CD14-positive monocyte (primary cell): ENCODE measurements at regions of chr2 and their contacts with region 1.

Region 1: DNA sequence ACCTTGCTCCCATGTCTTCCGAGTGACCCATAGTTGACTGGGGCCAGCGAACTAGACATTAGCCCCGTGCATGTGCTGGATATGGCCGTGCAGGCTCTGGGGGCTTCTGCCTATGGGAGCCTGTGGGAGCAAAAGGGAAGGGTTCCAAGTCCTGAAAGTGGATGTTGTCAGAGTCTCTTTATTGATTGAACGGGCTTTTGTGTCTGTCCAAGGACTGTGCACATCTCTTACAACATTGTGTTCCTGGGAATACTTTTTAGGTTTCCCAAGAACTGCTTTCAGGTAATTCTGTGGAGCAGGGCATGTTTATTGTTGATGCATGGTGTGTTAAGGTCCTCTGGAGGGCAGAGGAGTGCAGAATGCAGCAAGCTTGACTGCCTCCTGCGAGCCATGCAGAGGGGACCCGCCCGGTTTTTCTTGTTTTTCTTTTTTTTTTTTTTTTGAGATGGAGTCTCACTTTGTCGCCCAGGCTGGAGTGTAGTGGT is 5.0 kb downstream of the RNF144A start:
- DNase-seq: no peak
- H3K4me3 ChIP-seq: no peak overlapping the region
- H3K4me3 Mint-ChIP-seq: no peak overlapping the region
- H3K27ac ChIP-seq: no peak overlapping the region
- H3K27ac Mint-ChIP-seq: no peak overlapping the region
- H3K4me1 ChIP-seq: peaks cover 8% of the 10 kb centered on the region in 2 donors
- H3K4me1 Mint-ChIP-seq: peaks cover 18% of the 10 kb centered on the region
- H3K27me3 ChIP-seq: no peaks in the 10 kb centered on the region
- H3K27me3 Mint-ChIP-seq: peaks cover 2 to 11% (median 9%) of the 10 kb centered on the region in 3 donors
- CTCF ChIP-seq: no peak

Region 2: GRCh38 chr2:7014174-7014640 is 92.0 kb after region 1 on chr2:
- intact Hi-C with region 1: loop called (anchors 5 to 10 kb)
- DNase-seq: peak; percentile 14 to 45 (median 16)
- H3K4me3 ChIP-seq: no peak overlapping the region
- H3K4me3 Mint-ChIP-seq: no peak overlapping the region
- H3K27ac ChIP-seq: no peak overlapping the region
- H3K27ac Mint-ChIP-seq: peak overlapping the region in 1 of 7 donors; percentile 0
- H3K4me1 ChIP-seq: peaks cover 12 to 18% of the 10 kb centered on the region in 2 donors
- H3K4me1 Mint-ChIP-seq: peaks cover 30% of the 10 kb centered on the region
- H3K27me3 ChIP-seq: no peaks in the 10 kb centered on the region
- H3K27me3 Mint-ChIP-seq: no peaks in the 10 kb centered on the region
- CTCF ChIP-seq: peak; percentile 65